Cardiac septum (tissue), 1 donor: ENCODE measurements at regions of chr2 and their contacts with region 1.

Region 1: GRCh38 chr2:84022810-84023431 is 436.2 kb downstream of the SUCLG1 start:
- DNase-seq: no peak

Region 2: DNA sequence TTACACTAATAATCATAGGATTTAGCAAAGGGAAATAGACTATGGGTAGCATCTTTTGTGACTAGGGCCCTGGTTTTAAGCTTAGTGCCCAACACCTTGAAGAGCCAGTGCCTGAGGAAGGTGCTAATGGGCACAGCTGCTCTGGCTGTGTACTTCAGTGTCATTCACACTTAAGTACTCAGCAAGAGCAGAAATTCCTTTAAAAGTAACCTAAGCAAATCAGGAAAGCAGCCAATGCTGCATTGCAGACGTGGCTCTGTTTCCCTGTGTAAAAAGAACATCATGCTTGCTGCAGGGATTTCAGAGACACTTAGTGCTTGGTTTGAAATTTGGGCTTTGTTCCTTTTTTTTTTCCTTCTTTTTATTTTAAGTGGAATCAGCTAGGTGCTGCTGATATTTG is 69.2 kb before region 1 on chr2:
- intact Hi-C with region 1: no loop called
- DNase-seq: no peak

Region 3: DNA sequence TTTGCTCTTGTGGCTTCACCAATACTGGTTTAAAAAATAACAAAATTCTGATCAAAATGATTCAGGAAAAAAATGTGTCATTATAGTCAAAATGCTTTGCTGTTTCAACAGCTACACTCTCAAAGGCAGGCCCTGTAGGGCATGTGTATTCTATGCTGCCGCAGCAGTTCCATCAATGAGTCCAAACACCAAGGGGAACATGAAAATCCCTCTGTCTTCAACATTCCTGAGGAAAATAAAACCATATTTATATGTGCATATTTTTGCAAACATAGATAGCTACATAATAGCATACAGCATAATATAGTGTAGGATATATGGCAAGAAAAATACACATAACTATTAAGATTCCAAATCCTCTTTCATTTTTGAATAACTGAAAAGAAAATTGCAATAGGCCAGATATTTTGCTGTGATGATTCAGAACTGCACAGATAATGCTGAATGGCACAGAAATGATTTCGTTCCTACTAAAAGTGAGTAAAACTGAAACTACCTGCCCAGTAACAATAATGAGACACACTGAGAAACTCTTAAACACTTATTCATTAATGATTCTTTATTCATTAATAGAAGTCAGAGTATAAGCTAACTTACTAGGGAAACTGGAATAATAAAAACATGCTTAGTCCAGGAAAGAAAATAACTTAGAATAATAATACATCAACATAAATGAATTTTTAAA is 92.4 kb after region 1 on chr2:
- intact Hi-C with region 1: no loop called
- DNase-seq: no peak

Region 4: GRCh38 chr2:84302513-84303412 is 279.8 kb after region 1 on chr2:
- intact Hi-C with region 1: loop called (anchors 2 kb)
- DNase-seq: no peak